Colonic mucosa (tissue), 4 donors: ENCODE measurements at regions of chrX and their contacts with region 1.

Region 1: DNA sequence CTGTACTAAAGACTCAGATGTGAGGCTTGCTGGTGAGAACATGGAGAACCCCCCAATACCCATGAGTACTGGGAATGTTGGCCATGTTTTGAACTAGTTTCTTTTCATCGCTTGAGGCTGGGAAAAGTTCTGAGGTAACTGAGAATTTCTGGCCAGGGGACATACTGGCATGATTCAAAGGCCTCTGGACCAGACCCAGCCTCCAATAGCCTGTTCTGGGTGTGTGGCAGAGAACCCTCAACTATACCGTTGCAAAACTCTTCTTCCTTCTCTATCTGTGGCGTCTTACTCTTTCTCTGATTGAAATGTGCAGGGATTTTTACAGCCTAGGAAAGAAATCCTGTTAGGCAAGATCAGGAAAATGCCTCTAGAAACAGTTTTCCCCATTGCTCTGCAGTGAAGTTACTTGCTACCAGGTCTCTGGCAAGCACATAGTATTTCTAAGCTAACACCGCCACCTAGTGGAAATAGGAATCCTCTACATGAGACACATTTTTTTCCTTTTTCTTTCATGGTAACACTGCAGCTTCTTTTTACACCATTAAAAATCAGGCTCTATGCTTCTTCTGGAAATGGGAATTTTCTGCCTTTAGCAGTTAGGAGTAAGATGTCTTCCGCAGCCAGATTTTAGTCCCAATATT is 170.7 kb upstream of the ZCCHC13 start:
- DNase-seq: peak; percentile 27
- H3K4me3 ChIP-seq: no peak overlapping the region
- H3K27ac ChIP-seq: no peak overlapping the region
- H3K4me1 ChIP-seq: no peaks in the 10 kb centered on the region
- H3K27me3 ChIP-seq: no peaks in the 10 kb centered on the region
- CTCF ChIP-seq: peak; percentile 75

Region 2: GRCh38 chrX:74015379-74016019 is 117.8 kb before region 1 on chrX:
- intact Hi-C with region 1: loop called (anchors 5 kb)
- DNase-seq: peak; percentile 74
- H3K4me3 ChIP-seq: no peak overlapping the region
- H3K27ac ChIP-seq: no peak overlapping the region
- H3K4me1 ChIP-seq: no peaks in the 10 kb centered on the region
- H3K27me3 ChIP-seq: no peaks in the 10 kb centered on the region
- CTCF ChIP-seq: peak; percentile 80